ENCODE measurements at regions of chr11 and their contacts with region 1.

Region 1: DNA sequence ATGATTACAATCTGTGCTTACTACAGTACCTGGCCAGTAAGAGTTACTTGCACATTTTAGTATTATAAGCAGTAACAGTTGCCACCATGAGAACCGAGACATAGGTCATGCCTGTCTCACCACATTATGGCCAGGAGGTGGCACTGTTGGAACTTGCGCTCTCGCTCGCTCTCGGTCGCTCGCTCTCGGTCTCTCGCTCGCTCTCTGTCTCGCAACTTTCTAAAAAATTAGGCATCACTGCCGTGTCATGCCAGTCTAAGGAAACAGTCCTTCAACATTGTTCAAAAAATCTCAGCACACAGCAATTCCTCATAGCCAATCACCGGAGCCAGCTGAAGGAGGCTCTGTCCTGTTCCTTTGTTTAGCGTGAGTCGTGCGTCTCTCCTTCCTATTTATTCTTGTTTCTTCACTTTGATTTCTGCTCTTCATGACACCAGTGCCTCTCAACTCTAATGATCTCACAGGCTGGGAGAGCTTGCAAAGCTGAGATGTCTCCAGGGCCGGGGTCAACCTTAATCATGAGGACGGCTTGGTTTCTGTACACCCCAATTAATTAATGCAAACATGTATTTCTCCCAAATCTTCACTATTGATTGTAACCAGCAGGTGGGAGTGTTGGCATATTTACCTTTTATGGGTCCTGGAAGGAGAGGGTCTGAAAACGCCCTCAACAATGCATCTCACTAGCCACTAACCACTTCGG is 6.3 kb upstream of the ADAMTS8 start:
- DNase-seq: peak; percentile 73

Region 2: GRCh38 chr11:130166457-130166784 is 268.3 kb before region 1 on chr11:
- in situ Hi-C with region 1: no loop called
- DNase-seq: peak; percentile 96

Region 3: DNA sequence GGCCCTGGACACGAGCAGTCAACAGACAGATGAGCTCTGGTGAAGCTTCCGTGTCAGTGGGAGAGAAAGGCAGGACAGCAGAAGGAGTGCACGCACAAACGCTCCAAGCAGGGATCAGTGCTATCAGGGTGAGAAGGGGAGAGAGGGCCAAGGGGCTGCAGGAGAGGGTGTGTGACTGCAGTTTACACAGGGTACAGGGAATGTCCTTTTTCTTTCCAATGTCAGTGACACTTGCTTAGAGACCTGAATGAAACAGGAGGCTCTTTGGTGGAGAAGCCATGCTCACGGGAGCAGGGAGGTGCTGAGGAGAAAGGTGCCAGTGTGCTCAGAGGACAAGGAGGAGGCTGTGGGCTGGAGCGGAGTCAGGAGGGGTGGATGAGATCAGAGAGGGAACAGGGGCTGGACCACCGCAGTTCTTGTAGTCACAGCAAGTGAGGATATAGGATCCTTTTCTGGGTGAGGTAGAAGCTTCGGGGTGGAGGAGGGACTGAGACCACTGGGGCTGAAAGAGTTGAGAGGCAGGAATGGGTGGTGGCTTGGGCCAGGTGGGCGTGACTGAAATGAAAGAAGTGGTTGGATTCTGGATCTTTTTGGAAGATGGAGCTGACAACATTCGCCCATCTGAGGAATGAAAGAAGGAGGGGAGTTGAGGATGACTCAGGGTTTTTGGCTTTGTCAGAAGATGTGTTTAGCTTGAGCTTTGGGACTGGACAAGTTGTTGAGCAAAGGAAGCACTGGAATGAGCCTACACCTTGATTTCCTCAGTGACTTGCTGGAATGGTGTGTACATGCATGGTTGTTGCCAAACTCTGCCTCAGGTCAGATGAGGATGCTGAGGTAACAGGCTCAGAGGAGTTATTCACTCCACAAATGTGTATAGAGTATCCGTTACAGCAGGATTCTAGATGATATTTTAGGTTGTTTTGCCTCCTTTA is 101.7 kb after region 1 on chr11:
- in situ Hi-C with region 1: no loop called
- DNase-seq: no peak

Region 4: DNA sequence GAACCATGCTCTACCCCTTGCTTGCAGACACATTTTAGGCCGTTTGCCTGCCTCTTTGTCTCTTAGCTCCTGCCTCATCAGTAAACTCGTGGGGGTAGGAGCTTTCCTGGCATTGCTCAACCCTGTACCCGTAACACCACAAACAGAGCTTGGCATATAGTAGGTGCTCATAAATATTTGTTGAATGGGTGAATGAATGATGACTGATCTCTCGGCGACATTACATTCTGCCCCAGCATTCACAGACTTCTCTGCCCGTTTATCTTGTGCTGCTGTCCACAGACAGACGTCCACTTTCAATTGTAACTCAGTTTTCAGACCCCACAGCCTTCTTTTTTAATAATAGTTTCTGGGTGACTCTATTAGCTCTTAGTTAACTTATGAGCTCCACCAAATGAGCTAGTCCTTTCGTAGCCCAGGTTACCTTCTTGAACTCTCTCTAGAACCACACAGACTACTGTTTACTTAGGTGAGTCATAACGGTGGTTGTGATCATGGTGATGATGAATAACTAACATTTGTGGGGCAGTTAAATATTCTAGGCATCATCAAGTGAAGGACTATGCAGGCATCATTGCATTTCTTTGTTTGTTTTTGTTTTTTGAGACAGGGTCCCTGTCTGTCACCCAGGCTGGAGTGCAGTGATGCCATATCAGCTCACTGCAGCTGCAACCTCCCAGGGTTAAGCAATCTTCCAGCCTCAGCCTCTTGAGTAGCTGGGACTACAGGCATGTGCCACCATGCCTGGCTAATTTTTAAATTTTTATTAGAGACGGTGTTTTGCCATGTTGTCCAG is 202.2 kb after region 1 on chr11:
- in situ Hi-C with region 1: loop called (anchors 25 kb)
- DNase-seq: peak; percentile 87

Region 5: GRCh38 chr11:130861902-130862860 is 427.5 kb after region 1 on chr11:
- in situ Hi-C with region 1: loop called (anchors 25 kb)
- DNase-seq: peak; percentile 85